OCI-LY7 (cell line): ENCODE measurements at regions of chr10 and their contacts with region 1.

Region 1: DNA sequence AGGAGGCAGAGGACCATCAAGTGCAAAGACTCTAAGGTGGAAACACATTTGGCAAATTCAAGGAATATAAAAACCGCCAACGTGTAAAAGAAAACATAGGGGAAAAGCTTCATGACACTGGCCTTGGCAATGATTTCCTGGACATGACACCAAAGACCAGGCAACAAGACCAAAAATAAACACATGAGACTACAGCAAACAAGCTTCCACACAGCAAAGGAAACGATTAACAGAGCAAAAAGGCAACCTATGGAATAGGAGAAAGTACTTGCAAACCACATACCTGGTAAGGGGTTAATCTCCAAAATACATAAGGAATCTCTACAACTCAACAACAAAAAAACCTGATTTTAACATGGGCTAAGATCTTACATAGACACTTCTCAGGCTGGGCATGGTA is 3.5 kb downstream of the GSTO1 start:
- DNase-seq: no peak
- H3K4me3 ChIP-seq: no peak overlapping the region
- H3K27ac ChIP-seq: no peak overlapping the region
- H3K4me1 ChIP-seq: peaks cover 14% of the 10 kb centered on the region
- CTCF ChIP-seq: no peak

Region 2: DNA sequence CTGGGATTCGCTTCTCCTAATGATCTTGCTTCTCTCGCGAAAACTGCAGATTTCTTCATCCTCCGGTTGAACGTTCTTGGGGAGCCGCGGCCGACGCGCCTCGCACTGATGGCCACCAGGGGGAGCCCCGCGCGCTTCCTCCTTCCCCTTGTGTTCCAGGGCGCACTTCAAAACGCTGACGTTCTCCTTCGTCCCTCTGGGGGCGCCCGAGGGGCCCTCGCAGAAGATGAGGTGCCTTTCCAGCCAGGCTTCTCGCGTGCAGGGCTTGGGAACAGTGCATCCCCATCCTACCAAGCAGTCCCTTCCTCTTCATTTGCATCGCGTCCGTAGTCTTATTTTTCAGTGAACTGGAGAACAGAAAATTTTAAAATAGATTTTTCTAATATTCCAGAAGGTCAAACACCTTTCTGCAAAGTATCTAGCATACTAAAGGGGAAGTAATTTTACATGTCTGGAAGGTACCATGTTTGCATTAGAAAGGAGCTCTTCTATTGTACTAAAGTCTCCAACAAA is 33.3 kb after region 1 on chr10:
- CTCF ChIA-PET with region 1: no interaction called
- POLR2A ChIA-PET with region 1: interaction called, 3 read pairs
- intact Hi-C with region 1: loop called (anchors 1 kb)
- DNase-seq: peak; percentile 91
- H3K4me3 ChIP-seq: no peak overlapping the region
- H3K27ac ChIP-seq: no peak overlapping the region
- H3K4me1 ChIP-seq: no peaks in the 10 kb centered on the region
- CTCF ChIP-seq: peak; percentile 100